MCF 10A (cell line): ENCODE measurements at regions of chr3 and their contacts with region 1.

Region 1: DNA sequence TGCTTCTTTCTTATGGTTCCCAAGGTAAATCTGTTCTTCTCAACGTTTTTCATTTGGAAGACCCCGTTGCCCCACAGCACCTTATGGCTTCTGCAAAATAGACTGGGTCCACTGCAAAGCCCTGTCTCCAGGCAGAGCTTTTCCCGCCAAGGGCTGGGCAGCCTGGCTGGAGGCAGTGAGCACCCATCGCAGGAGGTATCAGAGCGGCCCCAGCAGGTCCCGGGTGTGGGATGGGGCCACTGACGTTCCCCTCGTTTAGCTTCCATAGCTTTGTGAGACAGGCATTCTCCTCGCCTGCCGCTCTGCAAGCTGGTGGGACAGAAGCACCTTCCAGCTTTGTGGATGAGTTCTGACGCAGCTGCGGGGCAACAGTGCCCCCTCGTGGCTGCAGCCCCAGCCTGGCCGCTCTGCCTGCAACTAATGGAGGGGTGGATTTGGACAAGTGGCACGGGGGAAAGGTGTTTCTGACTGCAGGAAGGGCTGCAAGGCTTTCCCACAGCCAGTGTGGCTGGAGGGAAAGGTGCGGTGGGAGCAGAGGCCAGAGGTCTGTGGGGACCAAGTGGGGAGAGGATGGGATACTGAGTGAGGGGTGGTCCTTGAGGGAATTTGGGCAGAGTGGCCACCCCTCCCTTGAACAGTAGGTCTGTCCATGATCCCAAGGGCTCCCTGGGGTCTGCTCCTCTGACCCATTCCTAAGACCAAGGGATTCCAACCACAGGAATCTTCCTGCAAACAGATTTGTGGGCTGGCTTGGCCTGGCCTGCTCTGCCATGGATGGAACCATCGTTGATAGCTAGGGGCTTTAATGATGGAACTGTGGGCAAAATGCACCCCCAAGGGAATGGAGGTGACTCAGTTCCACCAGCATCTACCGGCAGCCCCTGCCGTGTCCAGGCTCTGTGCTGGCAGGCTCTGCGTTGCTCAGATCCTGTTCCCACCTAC is 99.4 kb downstream of the FBLN2 start:
- DNase-seq: peak; percentile 79
- H3K4me3 Mint-ChIP-seq: no peak overlapping the region
- H3K27ac Mint-ChIP-seq: no peak overlapping the region
- H3K4me1 Mint-ChIP-seq: peaks cover 27% of the 10 kb centered on the region
- H3K27me3 Mint-ChIP-seq: no peaks in the 10 kb centered on the region
- CTCF ChIP-seq: peak; percentile 95

Region 2: GRCh38 chr3:12868039-12869034 is 780.0 kb before region 1 on chr3:
- CTCF ChIA-PET with region 1: interaction called, 4 read pairs
- POLR2A ChIA-PET with region 1: no interaction called
- intact Hi-C with region 1: loop called (anchors 10 kb)
- DNase-seq: peak; percentile 83
- H3K4me3 Mint-ChIP-seq: no peak overlapping the region
- H3K27ac Mint-ChIP-seq: no peak overlapping the region
- H3K4me1 Mint-ChIP-seq: peaks cover 8% of the 10 kb centered on the region
- H3K27me3 Mint-ChIP-seq: peaks cover 33% of the 10 kb centered on the region
- CTCF ChIP-seq: peak; percentile 82

Region 3: DNA sequence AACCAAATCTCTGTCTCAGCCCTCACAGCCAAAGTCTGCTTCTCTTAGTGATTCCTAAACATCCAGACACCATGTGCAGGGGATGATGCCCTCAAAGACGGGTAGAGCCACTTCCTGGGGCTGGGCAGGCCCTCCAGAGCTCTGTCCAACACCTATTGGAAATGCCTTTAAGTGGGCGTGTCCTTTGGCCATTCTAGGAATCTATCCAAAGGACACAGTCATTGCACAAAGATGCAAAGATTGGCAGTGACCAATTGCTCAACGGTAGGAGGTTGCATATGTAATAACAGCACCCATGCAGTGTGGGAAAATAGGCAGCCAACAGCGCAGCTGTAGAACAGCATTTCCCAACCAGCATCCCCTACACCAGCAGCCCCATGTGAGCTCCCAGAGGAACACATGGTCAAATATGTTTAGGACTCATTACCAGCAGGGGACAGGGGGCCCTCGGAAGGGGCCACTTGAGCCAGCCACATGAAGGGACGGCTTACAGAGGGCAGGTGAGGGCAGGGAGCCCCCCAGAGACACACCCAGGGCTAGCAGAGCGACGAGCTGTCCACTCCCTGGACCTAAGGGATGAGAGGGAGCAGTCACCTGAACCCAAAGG is 432.3 kb before region 1 on chr3:
- CTCF ChIA-PET with region 1: no interaction called
- POLR2A ChIA-PET with region 1: no interaction called
- intact Hi-C with region 1: loop called (anchors 10 kb)
- DNase-seq: peak; percentile 93
- H3K4me3 Mint-ChIP-seq: no peak overlapping the region
- H3K27ac Mint-ChIP-seq: no peak overlapping the region
- H3K4me1 Mint-ChIP-seq: peaks cover 12% of the 10 kb centered on the region
- H3K27me3 Mint-ChIP-seq: no peaks in the 10 kb centered on the region
- CTCF ChIP-seq: no peak

Region 4: GRCh38 chr3:13495921-13496723 is 152.2 kb before region 1 on chr3:
- CTCF ChIA-PET with region 1: interaction called, 362 read pairs
- POLR2A ChIA-PET with region 1: interaction called, 13 read pairs
- intact Hi-C with region 1: loop called (anchors 1 kb)
- DNase-seq: peak; percentile 80
- H3K4me3 Mint-ChIP-seq: no peak overlapping the region
- H3K27ac Mint-ChIP-seq: peak overlapping the region; percentile 19
- H3K4me1 Mint-ChIP-seq: peaks cover 14% of the 10 kb centered on the region
- H3K27me3 Mint-ChIP-seq: no peaks in the 10 kb centered on the region
- CTCF ChIP-seq: peak; percentile 96

Region 5: DNA sequence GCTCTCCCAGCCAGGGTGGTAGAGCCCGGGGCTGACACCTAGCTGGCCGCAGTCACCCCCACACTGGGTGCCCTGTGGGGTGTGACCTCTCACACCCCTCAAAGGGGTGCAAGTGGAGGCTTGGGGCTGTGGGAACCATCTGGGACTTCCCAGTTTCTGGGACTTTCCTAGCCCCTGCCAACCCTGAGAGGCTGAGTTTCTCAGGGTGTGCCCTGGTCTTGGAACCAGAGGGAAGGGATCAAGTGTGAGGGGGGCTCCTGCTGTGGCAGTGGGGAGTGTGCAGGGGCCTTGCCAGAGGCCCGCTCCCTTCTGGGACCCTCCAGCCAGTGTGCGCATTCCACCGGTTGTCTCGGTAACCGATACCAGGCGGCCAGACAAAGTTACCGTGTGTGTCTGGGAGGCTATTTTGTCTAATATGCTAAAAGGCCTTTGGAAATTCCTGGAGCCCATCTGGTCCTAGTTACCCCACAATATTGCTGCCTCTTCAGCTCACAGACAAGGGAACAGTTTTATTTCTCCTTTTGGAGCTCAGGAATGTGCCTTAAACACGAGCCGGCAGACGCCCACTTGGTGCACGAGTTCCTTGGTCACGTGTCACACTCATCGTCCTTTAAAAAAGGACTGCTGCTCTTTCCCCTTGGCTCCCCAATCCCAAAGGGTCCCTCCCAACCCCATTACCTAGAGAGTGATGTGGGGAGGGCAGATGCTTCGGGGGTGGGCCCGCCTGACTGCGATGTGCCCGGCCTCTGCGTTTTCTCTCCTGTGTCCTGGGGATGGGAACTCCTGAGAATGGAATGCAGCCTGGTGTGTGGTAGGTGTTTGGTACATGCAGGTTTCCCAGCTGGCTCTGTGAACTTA is 135.1 kb before region 1 on chr3:
- CTCF ChIA-PET with region 1: interaction called, 15 read pairs
- POLR2A ChIA-PET with region 1: interaction called, 3 read pairs
- intact Hi-C with region 1: no loop called
- DNase-seq: no peak
- H3K4me3 Mint-ChIP-seq: no peak overlapping the region
- H3K27ac Mint-ChIP-seq: no peak overlapping the region
- H3K4me1 Mint-ChIP-seq: peaks cover 29% of the 10 kb centered on the region
- H3K27me3 Mint-ChIP-seq: no peaks in the 10 kb centered on the region
- CTCF ChIP-seq: no peak

Region 6: DNA sequence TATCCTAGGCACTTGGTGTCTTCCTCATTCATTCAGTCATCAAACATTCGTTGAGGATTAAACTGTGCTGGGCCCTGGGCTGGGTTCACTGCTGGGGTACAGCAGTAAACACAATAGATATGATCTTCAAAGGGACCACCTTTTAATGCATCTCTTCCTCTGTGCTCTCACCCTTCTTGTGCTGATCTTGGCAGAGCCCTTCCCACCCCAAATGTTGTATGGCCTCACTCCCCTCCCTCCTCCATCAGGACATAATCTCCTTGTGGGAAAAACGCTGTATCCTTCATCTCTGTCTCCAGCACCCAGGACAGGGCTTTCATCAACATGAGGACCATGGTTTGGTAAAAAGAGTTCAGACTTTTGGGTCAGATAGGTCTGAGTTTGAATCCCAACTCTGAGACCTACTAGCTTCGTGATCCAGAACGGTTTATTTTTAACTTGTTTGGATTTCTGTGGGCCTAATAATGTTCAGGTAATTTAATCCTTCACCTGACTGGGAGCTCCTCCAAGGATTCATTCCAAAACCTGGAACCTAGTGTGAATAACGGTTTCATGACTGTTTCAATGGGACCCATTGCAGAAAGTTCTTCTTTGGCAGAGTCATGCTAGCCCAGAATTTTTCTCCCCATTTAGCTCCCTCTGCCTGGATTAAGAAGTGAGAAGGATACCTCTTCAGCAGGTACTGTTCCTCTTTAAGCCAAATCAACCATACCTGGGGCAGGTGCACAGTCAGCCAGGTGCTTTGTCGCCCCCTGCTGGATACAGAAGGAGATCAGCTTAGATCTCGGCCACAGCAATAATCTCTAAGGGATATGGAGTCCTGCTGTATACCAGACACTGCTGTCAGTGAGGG is 236.7 kb after region 1 on chr3:
- CTCF ChIA-PET with region 1: interaction called, 597 read pairs
- POLR2A ChIA-PET with region 1: no interaction called
- intact Hi-C with region 1: no loop called
- DNase-seq: peak; percentile 75
- H3K4me3 Mint-ChIP-seq: no peak overlapping the region
- H3K27ac Mint-ChIP-seq: no peak overlapping the region
- H3K4me1 Mint-ChIP-seq: peaks cover 1% of the 10 kb centered on the region
- H3K27me3 Mint-ChIP-seq: peaks cover 34% of the 10 kb centered on the region
- CTCF ChIP-seq: peak; percentile 82

Region 7: DNA sequence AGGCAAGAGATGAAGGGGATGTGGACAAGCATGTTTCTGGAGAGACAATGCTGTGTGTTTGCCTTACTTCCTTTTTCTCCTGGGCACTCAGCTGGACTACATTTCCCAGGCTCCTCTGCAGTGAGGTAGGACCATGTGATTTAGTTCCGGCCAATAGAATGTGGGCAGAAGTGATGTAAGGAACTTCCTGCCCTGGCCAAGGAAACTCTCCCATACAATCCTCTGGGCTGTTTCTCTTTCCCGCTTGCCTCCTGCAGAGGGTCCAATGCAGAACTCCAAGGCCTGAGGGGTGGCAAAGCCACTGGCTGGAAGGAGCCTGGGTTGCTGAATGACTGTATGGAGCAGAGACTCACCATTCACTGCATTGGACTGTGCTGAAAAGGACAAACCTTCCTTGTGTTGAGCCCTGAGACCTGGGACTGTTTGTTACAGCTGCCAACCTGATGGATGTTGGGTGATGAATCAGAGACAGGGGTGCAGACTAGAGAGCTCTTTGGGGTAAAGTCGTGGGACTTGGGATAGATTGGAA is 671.4 kb after region 1 on chr3:
- CTCF ChIA-PET with region 1: no interaction called
- POLR2A ChIA-PET with region 1: no interaction called
- intact Hi-C with region 1: no loop called
- DNase-seq: peak; percentile 74
- H3K4me3 Mint-ChIP-seq: no peak overlapping the region
- H3K27ac Mint-ChIP-seq: no peak overlapping the region
- H3K4me1 Mint-ChIP-seq: no peaks in the 10 kb centered on the region
- H3K27me3 Mint-ChIP-seq: peaks cover 7% of the 10 kb centered on the region
- CTCF ChIP-seq: no peak